MCF 10A (cell line): ENCODE measurements at regions of chr1 and their contacts with region 1.

Region 1: DNA sequence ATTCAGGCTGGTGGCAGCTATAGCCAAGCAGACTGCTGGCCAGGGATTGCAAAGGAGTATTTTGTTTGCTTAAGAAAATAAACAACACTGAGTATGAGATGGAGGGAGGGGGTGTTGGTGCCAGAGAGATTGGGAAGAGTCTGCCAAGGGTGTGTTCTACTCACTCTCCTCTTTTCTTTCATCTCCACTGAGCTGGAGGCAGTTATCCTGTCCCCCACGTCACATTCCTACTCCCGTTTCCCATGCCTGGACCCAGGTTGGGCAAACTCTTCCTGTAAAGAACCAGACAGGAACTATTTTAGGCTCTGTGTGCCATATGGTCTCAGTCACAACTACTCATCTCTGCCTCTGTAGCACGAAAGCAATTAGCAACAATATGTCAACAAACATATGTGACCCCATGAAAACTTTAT is 1.4 kb upstream of the IL24 start:
- DNase-seq: peak; percentile 99
- H3K4me3 Mint-ChIP-seq: peak overlapping the region; percentile 2
- H3K27ac Mint-ChIP-seq: peak overlapping the region; percentile 89
- H3K4me1 Mint-ChIP-seq: peaks cover 71% of the 10 kb centered on the region
- H3K27me3 Mint-ChIP-seq: no peaks in the 10 kb centered on the region
- CTCF ChIP-seq: no peak

Region 2: DNA sequence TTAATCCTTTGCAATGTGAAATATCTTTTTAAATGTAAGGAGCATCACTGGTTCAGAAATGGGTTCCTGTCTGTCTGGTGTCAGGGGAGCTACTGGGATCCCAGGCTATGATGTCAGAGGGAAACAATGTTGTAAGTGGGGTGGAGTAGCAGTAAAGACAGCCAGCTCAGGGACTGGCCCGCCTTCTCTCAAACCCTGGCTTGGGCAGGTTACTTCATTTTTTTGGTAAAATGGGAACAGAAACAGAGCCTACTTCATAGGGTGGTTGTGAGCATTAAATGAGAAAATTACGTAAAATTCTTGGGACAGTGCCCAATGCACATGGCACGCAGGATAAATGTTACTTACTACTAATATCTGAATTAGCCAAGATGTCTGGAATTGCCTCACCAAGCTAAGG is 61.1 kb before region 1 on chr1:
- CTCF ChIA-PET with region 1: interaction called, 3 read pairs
- POLR2A ChIA-PET with region 1: interaction called, 15 read pairs
- intact Hi-C with region 1: no loop called
- DNase-seq: peak; percentile 63
- H3K4me3 Mint-ChIP-seq: no peak overlapping the region
- H3K27ac Mint-ChIP-seq: peak overlapping the region; percentile 21
- H3K4me1 Mint-ChIP-seq: peaks cover 31% of the 10 kb centered on the region
- H3K27me3 Mint-ChIP-seq: no peaks in the 10 kb centered on the region
- CTCF ChIP-seq: no peak

Region 3: DNA sequence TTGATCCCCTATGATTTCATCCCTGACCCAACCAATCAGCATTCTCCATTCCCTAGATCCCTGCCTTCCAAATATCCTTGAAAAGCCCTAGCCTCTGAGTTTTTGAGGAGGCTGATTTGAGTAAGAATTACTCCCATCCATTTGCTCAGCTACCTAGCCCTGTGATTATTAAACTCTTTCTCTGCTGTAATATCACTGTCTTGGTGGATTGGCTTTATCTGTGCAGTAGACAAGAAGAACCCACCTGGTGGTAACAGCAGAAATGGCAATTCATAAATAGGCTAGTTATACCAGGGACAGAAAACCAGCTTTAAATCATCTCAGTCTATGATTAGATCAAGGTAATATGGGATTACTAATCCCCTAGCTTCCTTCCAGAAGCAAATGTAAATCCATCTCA is 17.4 kb before region 1 on chr1:
- CTCF ChIA-PET with region 1: interaction called, 5 read pairs
- POLR2A ChIA-PET with region 1: interaction called, 86 read pairs
- intact Hi-C with region 1: no loop called
- DNase-seq: no peak
- H3K4me3 Mint-ChIP-seq: no peak overlapping the region
- H3K27ac Mint-ChIP-seq: no peak overlapping the region
- H3K4me1 Mint-ChIP-seq: peaks cover 19% of the 10 kb centered on the region
- H3K27me3 Mint-ChIP-seq: no peaks in the 10 kb centered on the region
- CTCF ChIP-seq: no peak

Region 4: GRCh38 chr1:207981976-207982375 is 1086.1 kb after region 1 on chr1:
- CTCF ChIA-PET with region 1: no interaction called
- POLR2A ChIA-PET with region 1: no interaction called
- intact Hi-C with region 1: no loop called
- DNase-seq: peak; percentile 47
- H3K4me3 Mint-ChIP-seq: no peak overlapping the region
- H3K27ac Mint-ChIP-seq: no peak overlapping the region
- H3K4me1 Mint-ChIP-seq: no peaks in the 10 kb centered on the region
- H3K27me3 Mint-ChIP-seq: peaks cover 44% of the 10 kb centered on the region
- CTCF ChIP-seq: peak; percentile 40